ENCODE measurements at regions of chr3 and their contacts with region 1.

Region 1: DNA sequence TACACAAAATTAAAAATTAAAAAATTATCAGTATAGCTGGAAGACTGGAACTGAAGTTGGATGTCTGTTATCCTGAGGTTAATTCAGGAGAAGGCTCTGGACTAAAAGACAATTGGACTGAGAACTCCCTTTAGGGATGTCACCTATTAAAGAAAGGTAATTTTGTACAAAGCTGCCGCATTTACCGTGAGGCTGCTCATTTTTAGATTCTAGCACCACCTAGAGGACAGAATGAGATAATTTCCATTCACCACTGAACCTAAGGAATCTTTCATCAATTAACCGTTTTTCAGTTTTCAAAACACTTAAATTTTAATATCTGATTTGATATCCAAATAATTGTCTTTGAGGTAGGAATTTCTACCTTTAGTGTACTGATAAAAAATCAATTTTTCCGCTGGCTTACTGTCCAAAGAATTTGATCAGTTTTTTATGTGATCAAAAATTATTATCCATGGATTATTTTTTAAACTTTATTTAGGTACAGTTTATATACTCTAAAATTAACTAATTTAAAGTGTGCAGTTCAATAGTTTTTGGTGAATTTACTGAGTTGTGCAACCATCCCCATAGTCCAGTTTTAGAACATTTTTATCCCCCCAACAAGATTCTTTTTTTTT is 106.7 kb upstream of the TNIK start:
- DNase-seq: no peak
- H3K4me3 Mint-ChIP-seq: no peak overlapping the region
- H3K27ac Mint-ChIP-seq: no peak overlapping the region
- H3K4me1 Mint-ChIP-seq: peaks cover 12% of the 10 kb centered on the region
- H3K27me3 Mint-ChIP-seq: peaks cover 5% of the 10 kb centered on the region

Region 2: DNA sequence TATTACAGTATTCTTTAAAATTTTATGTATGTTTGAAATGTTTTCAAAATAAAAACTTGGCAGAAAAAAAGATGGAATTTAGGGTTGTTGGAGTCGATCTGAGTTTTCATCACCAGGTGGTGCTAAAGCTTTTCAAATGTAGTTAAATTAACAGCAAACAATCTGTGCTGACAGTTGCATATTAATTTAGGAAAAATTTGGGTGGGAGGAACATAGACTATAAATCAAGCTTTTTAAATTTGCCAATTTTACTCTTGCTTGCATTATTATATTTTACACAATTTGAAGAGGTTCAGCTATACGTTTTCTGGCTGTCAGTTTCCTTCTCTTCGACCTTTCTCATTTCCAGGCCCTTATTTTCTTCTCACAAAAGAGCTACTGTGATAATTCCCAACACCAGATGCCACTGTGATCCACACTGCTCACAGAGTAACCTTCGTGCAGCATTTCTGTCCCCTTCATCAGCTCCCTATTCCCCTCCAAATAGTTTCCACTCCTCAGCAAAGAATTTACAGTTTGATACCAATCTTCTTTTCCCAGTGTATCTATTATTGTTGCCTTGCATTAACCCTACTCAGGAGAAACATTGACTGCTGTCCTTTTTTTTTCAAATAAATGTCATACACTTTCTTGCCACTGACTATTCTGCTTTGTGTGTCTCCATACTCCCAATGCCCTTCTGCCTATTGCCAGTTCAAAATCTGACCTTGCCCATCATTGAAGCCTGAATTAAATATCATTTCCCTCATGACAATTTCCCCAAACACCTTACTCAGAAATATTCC is 605.1 kb before region 1 on chr3:
- CTCF ChIA-PET with region 1: interaction called, 3 read pairs
- POLR2A ChIA-PET with region 1: no interaction called
- intact Hi-C with region 1: loop called (anchors 1 kb)
- DNase-seq: no peak
- H3K4me3 Mint-ChIP-seq: no peak overlapping the region
- H3K27ac Mint-ChIP-seq: no peak overlapping the region
- H3K4me1 Mint-ChIP-seq: no peaks in the 10 kb centered on the region
- H3K27me3 Mint-ChIP-seq: peaks cover 5% of the 10 kb centered on the region

Region 3: GRCh38 chr3:171049861-171050444 is 517.0 kb before region 1 on chr3:
- CTCF ChIA-PET with region 1: interaction called, 8 read pairs
- POLR2A ChIA-PET with region 1: no interaction called
- intact Hi-C with region 1: loop called (anchors 1 kb)
- DNase-seq: peak; percentile 61
- H3K4me3 Mint-ChIP-seq: no peak overlapping the region
- H3K27ac Mint-ChIP-seq: no peak overlapping the region
- H3K4me1 Mint-ChIP-seq: no peaks in the 10 kb centered on the region
- H3K27me3 Mint-ChIP-seq: peaks cover 8% of the 10 kb centered on the region

Region 4: DNA sequence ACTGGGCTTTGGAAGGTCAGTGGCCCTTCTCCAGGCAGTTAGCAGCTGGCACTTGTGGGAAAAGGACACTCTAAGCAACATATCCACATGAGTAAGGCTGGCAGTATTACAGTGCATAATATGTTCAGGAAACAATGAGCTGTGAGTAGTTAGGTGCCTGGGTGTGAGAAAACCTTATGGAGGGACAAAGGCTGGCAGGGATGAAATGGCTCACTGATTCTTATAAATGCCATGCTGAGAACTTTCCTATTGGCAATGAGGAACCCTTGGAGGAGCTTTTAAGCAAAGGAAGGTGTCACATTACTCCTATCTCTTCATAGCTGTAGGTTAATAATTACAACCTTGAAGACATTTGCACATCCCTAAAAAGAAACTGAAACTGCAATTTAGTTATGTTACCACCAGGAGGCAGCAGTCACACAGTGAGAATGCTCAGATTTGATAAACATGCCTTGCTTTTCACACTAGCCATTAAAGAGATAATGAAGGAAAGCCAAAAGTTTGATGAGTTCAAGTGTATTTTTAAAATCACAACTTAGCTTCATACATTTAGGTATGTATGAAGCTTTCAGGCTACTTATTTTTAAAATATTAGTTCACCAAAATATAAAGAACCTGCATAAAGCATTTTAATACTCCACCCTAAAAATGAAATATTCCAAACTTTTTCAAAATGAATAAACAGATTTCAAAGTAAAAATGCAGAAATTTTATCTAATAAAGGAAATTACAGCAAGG is 403.8 kb before region 1 on chr3:
- CTCF ChIA-PET with region 1: interaction called, 55 read pairs
- POLR2A ChIA-PET with region 1: no interaction called
- intact Hi-C with region 1: loop called (anchors 1 kb)
- DNase-seq: no peak
- H3K4me3 Mint-ChIP-seq: no peak overlapping the region
- H3K27ac Mint-ChIP-seq: no peak overlapping the region
- H3K4me1 Mint-ChIP-seq: peaks cover 24% of the 10 kb centered on the region
- H3K27me3 Mint-ChIP-seq: no peaks in the 10 kb centered on the region

Measured in activated CD4-positive, alpha-beta memory T cell treated with anti-CD3 and anti-CD28 coated beads for 36 hours (primary cell).